ENCODE measurements at regions of chr4 and their contacts with region 1.

Region 1: GRCh38 chr4:87144356-87144755 is 76.1 kb downstream of the KLHL8 start:
- DNase-seq: no peak
- H3K4me3 ChIP-seq: no peak overlapping the region
- H3K27ac ChIP-seq: no peak overlapping the region
- H3K4me1 ChIP-seq: no peaks in the 10 kb centered on the region
- H3K27me3 ChIP-seq: no peaks in the 10 kb centered on the region
- CTCF ChIP-seq: no peak

Region 2: DNA sequence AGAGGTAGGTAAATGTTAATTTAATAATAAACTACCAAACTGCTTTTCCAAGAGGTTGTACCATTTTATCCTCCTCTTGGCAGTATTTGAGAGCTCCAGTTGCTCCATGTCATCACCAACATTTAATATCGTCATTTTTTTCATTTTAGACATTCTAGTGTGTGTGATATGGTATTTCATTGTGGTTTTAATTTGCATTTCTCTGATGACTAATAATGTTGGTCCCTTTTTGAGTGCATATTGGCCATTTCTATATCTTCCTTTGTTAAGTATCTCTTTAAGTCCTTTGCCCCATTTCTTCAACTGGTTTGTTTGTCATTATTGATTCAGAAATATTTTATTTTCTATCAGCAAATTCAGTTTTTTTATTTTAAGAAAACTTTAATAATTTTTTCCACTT is 873.3 kb before region 1 on chr4:
- CTCF ChIA-PET with region 1: no interaction called
- POLR2A ChIA-PET with region 1: no interaction called
- intact Hi-C with region 1: no loop called
- DNase-seq: no peak
- H3K4me3 ChIP-seq: no peak overlapping the region
- H3K27ac ChIP-seq: no peak overlapping the region
- H3K4me1 ChIP-seq: no peaks in the 10 kb centered on the region
- H3K27me3 ChIP-seq: no peaks in the 10 kb centered on the region
- CTCF ChIP-seq: no peak

Region 3: DNA sequence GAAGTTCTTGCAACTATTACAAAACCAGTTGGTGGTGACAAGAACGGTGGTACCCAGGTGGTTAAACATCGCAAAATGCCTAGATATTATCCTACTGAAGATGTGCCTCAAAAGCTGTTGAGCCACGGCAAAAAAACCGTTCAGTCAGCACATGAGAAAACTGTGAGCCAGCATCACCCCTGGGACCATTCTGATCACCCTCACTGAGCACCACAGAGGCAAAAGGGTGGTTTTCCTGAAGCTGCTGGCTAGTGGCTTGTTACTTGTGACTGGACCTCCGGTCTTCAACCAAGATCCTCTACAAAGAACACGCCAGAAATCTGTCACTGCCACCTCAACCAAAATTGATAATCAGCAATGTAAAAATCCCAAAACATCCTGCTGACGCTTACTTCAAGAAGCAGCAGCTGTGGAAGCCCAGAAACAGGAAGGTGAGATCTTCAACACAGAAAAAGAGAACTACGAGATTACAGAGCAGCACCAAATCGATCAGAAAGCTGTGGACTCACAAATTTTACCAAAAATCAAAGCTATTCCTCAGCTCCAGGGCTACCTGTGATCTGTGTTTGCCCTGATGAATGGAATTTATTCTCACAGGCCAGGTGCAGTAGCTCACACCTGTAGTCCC is 273.8 kb before region 1 on chr4:
- CTCF ChIA-PET with region 1: interaction called, 10 read pairs
- POLR2A ChIA-PET with region 1: no interaction called
- intact Hi-C with region 1: no loop called
- DNase-seq: no peak
- H3K4me3 ChIP-seq: no peak overlapping the region
- H3K27ac ChIP-seq: no peak overlapping the region
- H3K4me1 ChIP-seq: no peaks in the 10 kb centered on the region
- H3K27me3 ChIP-seq: no peaks in the 10 kb centered on the region
- CTCF ChIP-seq: no peak

Region 4: DNA sequence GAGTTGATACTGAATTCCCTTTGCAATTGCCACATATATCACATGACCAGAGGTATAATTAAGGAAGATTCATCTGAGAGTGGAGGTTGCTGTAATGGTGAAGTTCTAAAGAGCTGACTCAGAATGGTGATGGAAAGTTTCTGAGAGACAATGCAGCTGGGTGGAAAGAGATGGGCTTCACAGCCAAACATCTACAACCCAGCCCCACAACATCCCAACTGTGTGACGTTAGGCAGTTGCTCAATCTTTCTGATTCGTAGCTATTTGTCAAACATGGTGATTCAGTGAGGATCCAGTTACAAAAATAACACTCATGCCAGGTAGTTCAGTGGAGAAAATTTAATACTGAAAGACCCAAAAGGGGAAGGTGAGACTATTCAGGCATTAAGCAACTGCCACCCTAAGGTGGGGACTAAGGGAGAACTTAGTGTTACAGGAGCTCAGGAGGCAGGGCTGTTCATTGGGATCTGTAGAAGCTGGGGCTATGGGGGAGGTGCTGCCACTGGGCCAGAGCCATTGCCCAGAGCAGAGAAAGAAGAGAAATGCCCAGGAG is 216.4 kb before region 1 on chr4:
- CTCF ChIA-PET with region 1: interaction called, 10 read pairs
- POLR2A ChIA-PET with region 1: no interaction called
- intact Hi-C with region 1: no loop called
- DNase-seq: no peak
- H3K4me3 ChIP-seq: no peak overlapping the region
- H3K27ac ChIP-seq: no peak overlapping the region
- H3K4me1 ChIP-seq: peaks cover 9% of the 10 kb centered on the region
- H3K27me3 ChIP-seq: no peaks in the 10 kb centered on the region
- CTCF ChIP-seq: no peak